Activated T-helper 2 cell treated with anti-CD3 and anti-CD28 coated beads, Interferon-gamma antibody, Interleukin-2, Interleukin-4, amounts not matched to agents 10 μg/mL and 5 μg/mL and 100 μg/mL, durations not matched to agents 14 hours and 24 hours and 36 hours (primary cell): ENCODE measurements at regions of chr2 and their contacts with region 1.

Region 1: DNA sequence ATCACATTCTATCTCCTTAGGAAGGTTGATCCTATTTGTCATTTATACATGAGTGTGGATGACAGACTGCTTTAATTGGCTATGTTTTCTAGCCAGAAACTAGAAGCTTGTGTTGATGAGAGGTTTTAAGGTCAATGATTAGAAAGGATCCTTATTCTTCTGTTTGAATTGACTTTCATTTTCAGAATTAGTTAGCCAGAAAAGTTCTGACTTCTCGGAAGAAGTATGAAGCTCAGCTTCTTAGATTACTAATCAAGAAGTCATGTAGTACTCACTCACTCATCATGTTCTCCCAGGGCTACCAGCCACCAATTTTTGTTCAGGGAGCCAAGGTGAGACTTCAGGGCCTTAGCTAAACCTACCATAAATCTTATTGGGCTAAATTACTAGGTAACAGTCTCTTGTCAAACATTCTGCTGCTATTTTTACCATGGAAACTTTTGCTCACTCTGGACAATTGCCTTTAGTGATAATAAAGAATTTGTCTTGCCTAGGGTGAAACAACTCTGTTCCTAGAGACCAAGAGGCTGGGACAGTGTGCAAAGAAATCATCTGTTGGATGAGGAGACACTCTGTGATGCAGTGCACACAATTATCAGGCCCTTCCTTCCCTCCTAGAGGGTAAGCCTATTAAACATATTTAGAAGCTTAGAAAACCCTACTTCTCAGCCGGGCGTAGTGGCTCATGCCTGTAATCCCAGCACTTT is 111.6 kb upstream of the DNMT3A start:
- DNase-seq: peak; percentile 21
- H3K4me3 Mint-ChIP-seq: peak overlapping the region; percentile 21
- H3K27ac Mint-ChIP-seq: peak overlapping the region; percentile 89
- H3K4me1 Mint-ChIP-seq: peaks cover 32% of the 10 kb centered on the region
- H3K27me3 Mint-ChIP-seq: no peaks in the 10 kb centered on the region

Region 2: GRCh38 chr2:25514043-25514637 is 60.8 kb after region 1 on chr2:
- intact Hi-C with region 1: loop called (anchors 10 kb)
- DNase-seq: no peak
- H3K4me3 Mint-ChIP-seq: peak overlapping the region; percentile 48
- H3K27ac Mint-ChIP-seq: peak overlapping the region; percentile 88
- H3K4me1 Mint-ChIP-seq: peaks cover 27% of the 10 kb centered on the region
- H3K27me3 Mint-ChIP-seq: no peaks in the 10 kb centered on the region

Region 3: GRCh38 chr2:25586726-25587144 is 133.4 kb after region 1 on chr2:
- intact Hi-C with region 1: loop called (anchors 2 kb)
- DNase-seq: no peak
- H3K4me3 Mint-ChIP-seq: peak overlapping the region; percentile 67
- H3K27ac Mint-ChIP-seq: peak overlapping the region; percentile 96
- H3K4me1 Mint-ChIP-seq: peaks cover 28% of the 10 kb centered on the region
- H3K27me3 Mint-ChIP-seq: no peaks in the 10 kb centered on the region

Region 4: GRCh38 chr2:25632396-25632795 is 179.0 kb after region 1 on chr2:
- intact Hi-C with region 1: no loop called
- DNase-seq: no peak
- H3K4me3 Mint-ChIP-seq: no peak overlapping the region
- H3K27ac Mint-ChIP-seq: no peak overlapping the region
- H3K4me1 Mint-ChIP-seq: peaks cover 4% of the 10 kb centered on the region
- H3K27me3 Mint-ChIP-seq: no peaks in the 10 kb centered on the region